ENCODE measurements at regions of chr5 and their contacts with region 1.

Region 1: GRCh38 chr5:134296213-134296612 is 70.3 kb upstream of the PPP2CA start:
- DNase-seq: no peak
- H3K4me3 ChIP-seq: no peak overlapping the region
- H3K27ac ChIP-seq: no peak overlapping the region
- H3K4me1 ChIP-seq: no peaks in the 10 kb centered on the region
- H3K27me3 ChIP-seq: no peaks in the 10 kb centered on the region

Region 2: DNA sequence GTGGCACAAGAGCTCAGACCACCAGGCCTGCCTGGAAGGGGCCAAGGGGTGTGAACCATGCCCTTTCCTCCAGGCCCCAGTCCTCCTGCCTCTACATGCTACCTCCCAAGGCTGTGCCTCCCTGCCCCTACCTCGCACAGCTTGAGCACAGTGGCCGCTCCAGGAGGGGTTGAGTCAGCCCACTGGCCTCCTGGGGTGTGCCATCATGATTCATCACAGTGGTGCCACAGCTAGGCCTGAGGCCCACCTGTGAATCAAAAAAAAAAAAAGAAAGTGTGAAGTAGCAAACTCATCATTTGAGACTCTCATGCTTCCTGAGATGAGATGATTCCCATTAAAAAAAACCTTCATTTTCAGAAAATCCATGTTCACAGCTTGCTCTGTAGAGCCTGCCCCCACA is 1003.9 kb before region 1 on chr5:
- CTCF ChIA-PET with region 1: no interaction called
- POLR2A ChIA-PET with region 1: no interaction called
- DNase-seq: no peak
- H3K4me3 ChIP-seq: no peak overlapping the region
- H3K27ac ChIP-seq: no peak overlapping the region
- H3K4me1 ChIP-seq: no peaks in the 10 kb centered on the region
- H3K27me3 ChIP-seq: peaks cover 0 to 5% (median 0%) of the 10 kb centered on the region in 5 experiments

Region 3: DNA sequence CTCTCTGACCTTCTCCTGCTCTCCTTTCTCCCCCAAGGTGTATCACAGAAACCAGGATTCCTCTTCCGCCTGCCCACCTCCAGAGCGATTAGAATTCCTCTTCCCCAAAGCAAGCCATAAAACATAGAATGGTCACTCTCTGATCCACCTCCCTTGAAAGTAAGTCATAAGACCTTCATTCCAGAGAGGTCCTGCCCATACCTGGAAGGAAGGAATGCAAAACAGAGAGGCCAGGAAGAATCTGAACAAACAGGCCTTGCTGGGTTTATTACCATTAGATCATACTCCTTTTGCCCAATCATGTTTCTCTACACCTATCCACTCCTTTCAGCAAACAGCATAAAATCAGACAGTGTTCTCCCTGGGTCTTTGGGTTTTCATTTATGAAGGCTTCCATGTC is 49.8 kb after region 1 on chr5:
- CTCF ChIA-PET with region 1: no interaction called
- POLR2A ChIA-PET with region 1: no interaction called
- DNase-seq: no peak
- H3K4me3 ChIP-seq: no peak overlapping the region
- H3K27ac ChIP-seq: no peak overlapping the region
- H3K4me1 ChIP-seq: no peaks in the 10 kb centered on the region
- H3K27me3 ChIP-seq: no peaks in the 10 kb centered on the region

Region 4: DNA sequence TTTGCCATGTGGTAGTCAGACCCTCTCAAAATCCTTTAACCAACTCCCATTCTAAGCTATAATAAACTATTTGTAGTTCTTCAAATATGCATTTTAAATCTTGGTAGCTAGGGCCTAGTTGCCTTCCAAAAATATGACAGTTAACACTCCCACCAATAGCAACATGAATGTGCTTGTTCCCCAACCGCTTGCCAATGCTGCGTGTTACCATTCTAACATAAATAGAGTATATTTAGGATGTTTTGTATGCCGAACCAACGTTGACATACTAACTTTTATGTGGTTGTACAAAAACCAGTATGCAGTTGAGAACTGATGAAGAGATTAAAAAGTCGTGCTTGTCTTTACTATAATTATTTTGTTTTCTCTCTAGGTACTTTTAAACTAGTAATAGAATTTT is 84.1 kb after region 1 on chr5:
- CTCF ChIA-PET with region 1: interaction called, 11 read pairs
- POLR2A ChIA-PET with region 1: no interaction called
- DNase-seq: no peak
- H3K4me3 ChIP-seq: no peak overlapping the region
- H3K27ac ChIP-seq: no peak overlapping the region
- H3K4me1 ChIP-seq: no peaks in the 10 kb centered on the region
- H3K27me3 ChIP-seq: no peaks in the 10 kb centered on the region